Panc1 (cell line): ENCODE measurements at regions of chr6 and their contacts with region 1.

Region 1: DNA sequence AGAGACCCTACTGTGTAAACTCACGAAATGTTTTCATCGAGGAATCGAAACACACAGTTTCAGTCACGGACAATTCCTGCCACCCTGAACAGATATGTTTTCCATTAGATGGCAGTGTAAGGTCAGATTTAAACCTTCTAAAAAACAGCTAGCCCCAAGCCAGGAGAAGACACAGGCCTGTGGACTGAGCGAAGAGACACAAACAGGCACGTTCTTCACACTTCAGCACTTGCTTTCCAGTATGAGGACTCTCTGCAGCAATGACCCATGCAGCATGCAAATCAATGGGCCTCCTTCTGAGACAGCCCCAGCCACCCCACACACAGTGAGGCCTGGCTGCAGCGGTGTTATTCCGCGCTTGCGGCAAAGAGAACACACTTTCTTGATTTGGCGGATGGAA is 31.9 kb downstream of the HUS1B start:
- DNase-seq: no peak
- ATAC-seq: peak; percentile 78; the same call in 1 of the 2 replicates
- H3K4me3 ChIP-seq: no peak overlapping the region
- H3K27ac ChIP-seq: no peak overlapping the region
- H3K4me1 ChIP-seq: no peaks in the 10 kb centered on the region
- H3K27me3 ChIP-seq: no peaks in the 10 kb centered on the region
- CTCF ChIP-seq: peak; percentile 40; the same call in 1 of the 2 replicates

Region 2: GRCh38 chr6:642805-643204 is 17.8 kb after region 1 on chr6:
- CTCF ChIA-PET with region 1: no interaction called
- POLR2A ChIA-PET with region 1: interaction called, 10 read pairs
- in situ Hi-C with region 1: no loop called
- intact Hi-C with region 1: no loop called
- DNase-seq: no peak
- ATAC-seq: no peak
- H3K4me3 ChIP-seq: no peak overlapping the region
- H3K27ac ChIP-seq: no peak overlapping the region
- H3K4me1 ChIP-seq: no peaks in the 10 kb centered on the region
- H3K27me3 ChIP-seq: no peaks in the 10 kb centered on the region
- CTCF ChIP-seq: no peak

Region 3: DNA sequence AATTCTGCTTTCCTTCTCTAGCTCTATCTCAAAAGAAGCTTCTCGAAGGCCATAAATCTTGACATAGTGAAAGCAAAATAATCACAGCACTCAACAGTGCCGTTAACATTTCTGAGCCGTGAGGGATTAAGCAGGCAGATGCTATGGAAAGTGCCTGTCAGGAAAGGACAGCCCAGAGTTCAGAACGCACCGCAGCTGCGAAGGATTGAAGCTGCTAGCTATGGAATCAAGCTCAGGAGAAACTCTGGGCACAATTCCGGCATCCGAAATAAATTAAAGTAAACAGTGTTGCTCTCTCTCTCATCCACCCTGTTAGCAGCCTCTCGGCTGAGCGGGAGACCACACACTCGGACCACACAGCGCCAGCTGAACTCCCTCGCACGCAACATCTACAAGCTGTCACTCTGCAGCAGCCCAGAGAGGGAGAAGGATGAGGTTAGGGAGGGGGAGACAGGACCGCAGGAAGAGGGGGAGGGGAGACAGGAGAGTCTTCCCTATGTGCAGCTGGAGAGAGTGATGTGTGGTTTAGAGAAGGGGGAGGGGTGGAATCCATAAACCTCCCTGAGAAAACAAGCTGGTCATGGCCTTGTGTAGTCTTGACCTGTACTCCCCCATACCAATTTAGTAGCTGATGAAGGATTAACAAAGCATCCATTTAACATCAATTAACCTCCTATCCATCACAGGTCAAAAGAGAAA is 58.9 kb after region 1 on chr6:
- CTCF ChIA-PET with region 1: no interaction called
- POLR2A ChIA-PET with region 1: no interaction called
- in situ Hi-C with region 1: no loop called
- intact Hi-C with region 1: loop called (anchors 10 kb)
- DNase-seq: no peak
- ATAC-seq: peak; percentile 85
- H3K4me3 ChIP-seq: peak overlapping the region; percentile 26 to 46; a peak in 3 of 4 replicates
- H3K27ac ChIP-seq: peak overlapping the region; percentile 74
- H3K4me1 ChIP-seq: peaks cover 42% of the 10 kb centered on the region
- H3K27me3 ChIP-seq: no peaks in the 10 kb centered on the region
- CTCF ChIP-seq: no peak

Region 4: DNA sequence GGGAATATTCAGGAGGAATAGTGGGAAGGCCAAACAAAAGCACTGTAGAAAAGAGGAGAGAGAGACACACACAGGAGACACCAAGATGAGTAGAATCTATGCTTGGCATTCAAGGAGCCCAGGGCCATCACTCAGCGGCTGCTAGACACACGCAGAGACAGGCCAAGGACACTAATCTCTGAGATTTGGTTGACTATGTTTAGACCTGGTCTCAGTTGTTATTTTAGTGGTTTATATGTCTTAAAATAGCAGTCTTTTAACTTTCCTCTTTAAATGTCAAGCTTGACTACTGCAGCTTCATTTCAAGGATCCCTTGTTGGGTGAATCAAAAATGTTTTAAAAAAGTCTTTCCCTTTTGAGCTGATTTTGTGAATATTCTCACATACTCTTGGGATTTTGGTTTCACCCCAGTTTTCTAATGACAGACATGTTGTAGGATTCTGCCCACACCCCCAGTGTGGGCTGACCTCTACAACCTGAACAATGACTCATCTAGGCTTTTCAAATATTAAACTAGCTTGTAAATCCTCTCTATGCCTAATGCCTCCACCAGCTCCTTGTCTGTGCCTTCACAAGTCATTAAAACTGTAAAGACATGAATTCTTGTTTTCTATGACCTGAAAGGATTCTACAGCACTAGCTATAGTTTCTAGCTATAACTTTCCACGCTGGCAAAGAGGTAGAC is 210.6 kb after region 1 on chr6:
- CTCF ChIA-PET with region 1: no interaction called
- POLR2A ChIA-PET with region 1: no interaction called
- in situ Hi-C with region 1: no loop called
- intact Hi-C with region 1: no loop called
- DNase-seq: no peak
- ATAC-seq: no peak
- H3K4me3 ChIP-seq: no peak overlapping the region
- H3K27ac ChIP-seq: no peak overlapping the region
- H3K4me1 ChIP-seq: no peaks in the 10 kb centered on the region
- H3K27me3 ChIP-seq: no peaks in the 10 kb centered on the region; the same call in none of the 2 replicates
- CTCF ChIP-seq: no peak

Region 5: GRCh38 chr6:1778686-1779235 is 1153.8 kb after region 1 on chr6:
- CTCF ChIA-PET with region 1: no interaction called
- POLR2A ChIA-PET with region 1: no interaction called
- in situ Hi-C with region 1: no loop called
- intact Hi-C with region 1: no loop called
- DNase-seq: no peak
- ATAC-seq: no peak
- H3K4me3 ChIP-seq: no peak overlapping the region
- H3K27ac ChIP-seq: no peak overlapping the region
- H3K4me1 ChIP-seq: no peaks in the 10 kb centered on the region
- H3K27me3 ChIP-seq: no peaks in the 10 kb centered on the region
- CTCF ChIP-seq: no peak